ENCODE measurements at regions of chr15 and their contacts with region 1.

Region 1: GRCh38 chr15:40323239-40323952 is at the start of gene INAFM2:
- DNase-seq: peak; percentile 90 to 93
- H3K4me3 ChIP-seq: peak within 1 kb of the TSS; percentile 74
- H3K4me3 Mint-ChIP-seq: peak within 1 kb of the TSS; percentile 66
- H3K27ac Mint-ChIP-seq: no peak within 1 kb of the TSS
- H3K4me1 ChIP-seq: peaks cover 16% of the 10 kb centered on the region
- H3K4me1 Mint-ChIP-seq: peaks cover 25% of the 10 kb centered on the region
- H3K27me3 ChIP-seq: no peaks in the 10 kb centered on the region
- H3K27me3 Mint-ChIP-seq: no peaks in the 10 kb centered on the region
- CTCF ChIP-seq: peak; percentile 69 to 72
- total RNA-seq, gene INAFM2: 13.4 and 15.4 TPM in 2 replicates

Region 2: DNA sequence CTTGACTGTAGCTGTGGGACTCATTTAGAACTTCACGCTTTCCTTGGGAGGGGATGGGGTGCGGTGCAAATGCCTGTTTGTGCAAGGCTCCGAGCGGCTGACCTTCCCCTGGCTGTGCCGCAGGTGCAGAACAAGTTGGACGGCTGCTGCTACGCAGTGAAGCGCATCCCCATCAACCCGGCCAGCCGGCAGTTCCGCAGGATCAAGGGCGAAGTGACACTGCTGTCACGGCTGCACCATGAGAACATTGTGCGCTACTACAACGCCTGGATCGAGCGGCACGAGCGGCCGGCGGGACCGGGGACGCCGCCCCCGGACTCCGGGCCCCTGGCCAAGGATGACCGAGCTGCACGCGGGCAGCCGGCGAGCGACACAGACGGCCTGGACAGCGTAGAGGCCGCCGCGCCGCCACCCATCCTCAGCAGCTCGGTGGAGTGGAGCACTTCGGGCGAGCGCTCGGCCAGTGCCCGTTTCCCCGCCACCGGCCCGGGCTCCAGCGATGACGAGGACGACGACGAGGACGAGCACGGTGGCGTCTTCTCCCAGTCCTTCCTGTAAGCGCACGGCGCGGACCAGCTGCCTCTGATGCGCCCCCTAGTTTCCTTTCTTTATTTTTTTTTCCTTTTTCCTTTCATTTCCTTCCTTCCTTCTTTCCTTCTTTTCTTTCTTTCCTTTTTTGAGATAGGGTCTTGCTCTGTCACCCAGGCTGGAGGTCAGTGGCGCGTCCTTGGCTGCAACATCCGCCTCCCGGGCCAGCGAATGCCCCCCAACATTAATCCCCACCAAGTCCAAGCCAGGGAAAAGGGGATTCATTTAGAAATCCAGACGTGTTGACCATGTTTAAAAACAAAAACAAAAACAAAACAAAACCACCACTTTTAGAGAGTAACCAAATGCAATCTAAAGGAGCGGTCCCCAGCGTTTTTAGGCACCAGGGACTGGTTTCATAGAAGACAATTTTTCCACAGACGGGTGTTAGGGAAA is 346.8 kb before region 1 on chr15:
- CTCF ChIA-PET with region 1: no interaction called
- POLR2A ChIA-PET with region 1: no interaction called
- intact Hi-C with region 1: no loop called
- DNase-seq: peak; percentile 75 to 81
- H3K4me3 ChIP-seq: peak overlapping the region; percentile 74
- H3K4me3 Mint-ChIP-seq: peak overlapping the region; percentile 75
- H3K27ac Mint-ChIP-seq: peak overlapping the region; percentile 85
- H3K4me1 ChIP-seq: peaks cover 3% of the 10 kb centered on the region; the same call in 1 of the 2 replicates
- H3K4me1 Mint-ChIP-seq: peaks cover 6% of the 10 kb centered on the region
- H3K27me3 ChIP-seq: no peaks in the 10 kb centered on the region
- H3K27me3 Mint-ChIP-seq: no peaks in the 10 kb centered on the region
- CTCF ChIP-seq: peak in 1 of 2 experiments; percentile 58

Region 3: DNA sequence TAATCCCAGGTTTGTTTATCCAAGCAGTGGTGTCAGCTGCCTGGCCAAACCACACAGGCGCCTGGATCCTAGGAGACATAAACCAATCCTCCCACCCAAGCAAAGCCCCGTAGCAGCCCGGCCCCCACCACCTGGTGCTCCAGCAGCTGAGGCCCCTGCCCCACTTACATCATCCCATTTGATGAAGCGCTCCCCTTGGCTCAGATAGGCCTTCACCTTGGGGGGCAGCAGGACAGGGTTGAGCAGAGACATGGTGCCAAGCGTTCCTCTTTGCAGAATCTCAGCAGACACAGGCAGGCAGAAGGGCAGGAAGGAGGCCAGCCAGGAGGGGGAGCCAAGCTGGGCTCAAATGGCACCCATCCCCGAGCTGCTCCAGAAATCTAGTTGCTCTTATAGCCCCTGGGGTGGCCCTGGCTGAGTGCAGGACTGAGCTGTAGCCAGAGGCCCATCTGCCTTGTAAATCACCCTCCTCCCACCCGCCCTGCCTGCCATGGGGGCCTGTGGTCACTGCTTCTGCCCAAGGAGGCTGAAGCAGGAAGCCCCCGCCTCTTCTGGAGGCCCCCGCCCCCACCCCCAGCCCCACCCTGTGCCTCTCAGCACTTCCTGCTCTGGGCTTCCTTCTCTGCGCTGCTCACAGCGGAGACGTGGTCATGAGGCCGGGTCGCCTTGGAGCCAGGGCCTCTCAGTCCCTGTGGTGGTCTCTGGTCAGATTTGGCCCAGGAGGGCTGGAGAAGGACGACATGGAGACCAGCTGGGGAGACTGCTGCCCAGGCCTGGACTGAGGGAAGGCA is 15.8 kb before region 1 on chr15 and contains the start of gene PLCB2:
- CTCF ChIA-PET with region 1: interaction called, 9 read pairs
- POLR2A ChIA-PET with region 1: no interaction called
- intact Hi-C with region 1: loop called (anchors 1 kb)
- DNase-seq: peak in 1 of 2 experiments; percentile 36
- H3K4me3 ChIP-seq: no peak within 1 kb of the TSS
- H3K4me3 Mint-ChIP-seq: no peak within 1 kb of the TSS
- H3K27ac Mint-ChIP-seq: no peak within 1 kb of the TSS
- H3K4me1 ChIP-seq: no peaks in the 10 kb centered on the region
- H3K4me1 Mint-ChIP-seq: no peaks in the 10 kb centered on the region
- H3K27me3 ChIP-seq: no peaks in the 10 kb centered on the region
- H3K27me3 Mint-ChIP-seq: peaks cover 3% of the 10 kb centered on the region
- CTCF ChIP-seq: peak in 1 of 2 experiments; percentile 28
- total RNA-seq, gene PLCB2: 4.0 and 4.7 TPM in 2 replicates

Region 4: DNA sequence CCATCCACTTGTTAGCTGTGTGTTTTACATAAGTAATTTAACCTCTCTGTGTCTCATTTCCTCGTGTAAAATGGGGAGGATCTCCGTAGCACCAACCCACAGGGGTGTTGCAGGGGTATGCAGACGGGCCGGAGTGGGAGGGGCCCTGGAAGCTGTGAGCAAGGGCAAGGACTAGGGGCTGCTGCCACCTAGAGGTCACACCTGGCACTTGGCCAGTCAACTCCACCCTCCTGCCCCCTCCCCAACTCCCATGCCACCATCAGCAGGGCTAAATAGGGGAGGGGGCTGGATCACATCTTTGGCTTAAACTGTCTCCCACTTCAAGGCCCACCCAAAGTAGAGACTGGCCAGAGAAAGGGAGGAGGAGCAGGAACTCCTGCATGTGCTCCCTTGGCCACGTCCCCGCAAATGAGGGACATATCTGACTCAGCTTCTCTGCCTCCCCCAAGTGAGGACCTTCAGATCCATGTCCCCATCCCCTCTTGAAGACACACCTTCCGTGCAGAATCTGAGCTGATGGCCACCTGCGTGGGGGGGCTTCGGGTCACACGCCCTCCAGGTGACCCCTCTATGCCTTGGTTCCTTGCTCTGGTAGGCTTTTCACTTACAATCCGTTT is 14.8 kb after region 1 on chr15:
- CTCF ChIA-PET with region 1: interaction called, 47 read pairs
- POLR2A ChIA-PET with region 1: interaction called, 3 read pairs
- intact Hi-C with region 1: loop called (anchors 1 kb)
- DNase-seq: peak; percentile 84 to 87
- H3K4me3 ChIP-seq: no peak overlapping the region
- H3K4me3 Mint-ChIP-seq: no peak overlapping the region
- H3K27ac Mint-ChIP-seq: no peak overlapping the region
- H3K4me1 ChIP-seq: peaks cover 22% of the 10 kb centered on the region
- H3K4me1 Mint-ChIP-seq: peaks cover 26% of the 10 kb centered on the region
- H3K27me3 ChIP-seq: no peaks in the 10 kb centered on the region
- H3K27me3 Mint-ChIP-seq: no peaks in the 10 kb centered on the region
- CTCF ChIP-seq: peak; percentile 91 to 95

Region 5: DNA sequence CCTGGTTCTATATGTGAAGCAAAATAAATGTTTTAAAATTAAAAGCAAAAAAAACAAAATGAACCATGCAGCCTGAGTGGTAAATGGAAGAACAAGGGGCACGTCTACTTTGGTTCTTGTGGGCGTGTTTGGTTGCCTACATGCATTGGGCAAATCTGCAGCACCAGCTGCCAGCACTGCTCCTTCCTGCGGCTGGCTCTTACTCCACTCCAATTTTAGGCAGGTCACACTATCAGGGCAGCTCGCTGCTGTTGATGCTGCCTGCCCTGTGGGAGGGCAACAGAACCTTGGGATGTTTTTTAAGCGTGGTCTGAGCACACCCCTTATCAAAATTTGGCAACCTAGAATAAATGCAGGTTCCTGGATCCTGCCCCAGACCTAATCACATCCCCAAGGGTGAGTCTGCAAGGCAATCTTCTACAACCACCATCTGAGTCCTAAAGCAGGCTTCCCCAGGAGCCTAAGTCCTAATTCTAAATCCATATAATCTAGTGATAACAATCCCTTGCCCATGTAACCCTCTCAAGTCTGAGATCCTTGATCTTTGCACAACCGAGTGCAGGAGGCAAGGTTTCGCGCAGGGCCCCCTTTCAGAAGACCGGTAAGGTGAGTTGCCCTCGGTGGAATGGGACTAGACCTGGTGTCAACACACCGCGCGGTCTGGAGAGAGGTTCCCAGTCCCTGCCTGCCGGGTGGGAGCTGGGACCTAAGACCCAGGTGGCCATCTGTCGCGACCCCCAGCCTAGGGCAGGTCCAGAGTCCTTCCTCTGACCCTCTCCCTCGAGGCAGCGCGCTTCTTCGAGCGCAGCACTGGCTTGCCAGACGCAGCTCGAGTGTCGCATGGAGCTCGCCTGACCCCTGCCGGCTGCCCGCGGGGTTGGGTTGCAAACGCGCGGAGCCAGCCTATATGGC is 98.1 kb after region 1 on chr15:
- CTCF ChIA-PET with region 1: interaction called, 12 read pairs
- POLR2A ChIA-PET with region 1: no interaction called
- intact Hi-C with region 1: loop called (anchors 5 kb)
- DNase-seq: peak; percentile 79 to 87
- H3K4me3 ChIP-seq: peak overlapping the region; percentile 35
- H3K4me3 Mint-ChIP-seq: peak overlapping the region; percentile 9
- H3K27ac Mint-ChIP-seq: no peak overlapping the region
- H3K4me1 ChIP-seq: peaks cover 5% of the 10 kb centered on the region; the same call in 1 of the 2 replicates
- H3K4me1 Mint-ChIP-seq: no peaks in the 10 kb centered on the region
- H3K27me3 ChIP-seq: no peaks in the 10 kb centered on the region
- H3K27me3 Mint-ChIP-seq: no peaks in the 10 kb centered on the region
- CTCF ChIP-seq: peak; percentile 95 to 96